ENCODE measurements at regions of chr17 and their contacts with region 1.

Region 1: GRCh38 chr17:59331129-59331928 is at the start of gene YPEL2:
- DNase-seq: peak; percentile 96
- H3K4me3 ChIP-seq: peak within 1 kb of the TSS; percentile 27 to 98 (median 75)
- H3K27ac ChIP-seq: peak within 1 kb of the TSS; percentile 69
- H3K4me1 ChIP-seq: peaks cover 53% of the 10 kb centered on the region
- H3K27me3 ChIP-seq: no peaks in the 10 kb centered on the region
- CTCF ChIP-seq: no peak
- POLR2A ChIP-seq: peak; percentile 57
- total RNA-seq, gene YPEL2: 59.5 and 66.8 TPM in 2 replicates

Region 2: GRCh38 chr17:59110973-59111938 is 220.1 kb before region 1 on chr17:
- CTCF ChIA-PET with region 1: no interaction called
- POLR2A ChIA-PET with region 1: no interaction called
- dilution Hi-C with region 1: no loop called
- intact Hi-C with region 1: no loop called
- DNase-seq: no peak
- H3K4me3 ChIP-seq: no peak overlapping the region
- H3K27ac ChIP-seq: no peak overlapping the region
- H3K4me1 ChIP-seq: peaks cover 6% of the 10 kb centered on the region
- H3K27me3 ChIP-seq: no peaks in the 10 kb centered on the region
- CTCF ChIP-seq: no peak
- POLR2A ChIP-seq: no peak

Region 3: DNA sequence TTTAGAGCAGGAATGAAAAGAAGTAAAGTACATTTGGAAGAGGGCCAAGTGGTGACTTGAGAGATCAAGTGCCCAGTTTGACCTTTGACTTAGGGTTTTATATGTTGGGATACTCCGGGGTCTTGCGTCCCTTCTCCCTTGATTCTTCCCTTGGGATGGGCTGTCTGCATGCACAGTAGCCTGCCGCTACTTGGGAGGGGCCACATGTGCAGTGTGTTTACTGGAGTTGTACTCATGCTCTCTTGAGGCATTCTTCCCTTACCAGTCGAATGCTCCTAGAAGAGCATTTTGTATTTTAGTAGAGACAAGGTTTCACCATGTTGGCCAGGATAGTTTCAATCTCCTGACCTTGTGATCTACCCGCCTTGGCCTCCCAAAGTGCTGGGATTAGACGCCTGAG is 87.2 kb before region 1 on chr17:
- CTCF ChIA-PET with region 1: no interaction called
- POLR2A ChIA-PET with region 1: no interaction called
- dilution Hi-C with region 1: no loop called
- intact Hi-C with region 1: no loop called
- DNase-seq: no peak
- H3K4me3 ChIP-seq: no peak overlapping the region
- H3K27ac ChIP-seq: no peak overlapping the region
- H3K4me1 ChIP-seq: no peaks in the 10 kb centered on the region
- H3K27me3 ChIP-seq: no peaks in the 10 kb centered on the region
- CTCF ChIP-seq: no peak
- POLR2A ChIP-seq: no peak

Region 4: GRCh38 chr17:59366773-59367657 is 35.7 kb after region 1 on chr17:
- CTCF ChIA-PET with region 1: interaction called, 7 read pairs
- POLR2A ChIA-PET with region 1: interaction called, 5 read pairs
- dilution Hi-C with region 1: no loop called
- intact Hi-C with region 1: loop called (anchors 2 kb)
- DNase-seq: peak; percentile 32
- H3K4me3 ChIP-seq: no peak overlapping the region
- H3K27ac ChIP-seq: no peak overlapping the region
- H3K4me1 ChIP-seq: peaks cover 48% of the 10 kb centered on the region
- H3K27me3 ChIP-seq: no peaks in the 10 kb centered on the region
- CTCF ChIP-seq: no peak
- POLR2A ChIP-seq: no peak

Region 5: DNA sequence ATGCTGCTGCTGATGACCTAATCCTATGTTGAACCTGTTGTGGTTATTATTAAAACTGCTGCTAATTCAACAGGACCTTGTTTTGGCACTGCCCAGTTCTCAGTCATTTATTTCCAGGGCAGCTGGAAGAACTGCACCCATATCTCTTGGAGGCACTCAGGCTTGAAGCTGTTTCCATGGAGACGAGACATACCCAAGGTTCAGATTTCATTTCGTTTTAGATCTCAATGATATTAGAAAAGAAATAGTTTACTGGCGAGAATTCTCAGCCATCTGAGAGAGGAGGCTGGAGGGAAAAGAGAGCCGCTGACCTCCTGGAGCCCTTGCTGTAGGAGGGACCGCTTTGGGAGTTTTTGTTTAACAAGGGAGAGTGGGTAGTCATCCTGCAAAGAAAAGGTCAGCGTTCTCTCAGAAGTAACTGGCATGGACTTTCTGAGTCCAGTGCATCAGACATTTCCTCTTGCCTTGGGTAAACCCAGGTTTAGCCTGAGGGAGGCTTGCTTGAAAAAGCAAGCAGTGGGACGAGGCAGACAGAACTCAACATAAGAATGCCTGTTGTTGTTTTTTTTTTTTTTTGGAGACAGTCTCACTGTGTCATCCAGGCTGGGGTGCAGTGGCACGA is 75.6 kb after region 1 on chr17:
- CTCF ChIA-PET with region 1: interaction called, 12 read pairs
- POLR2A ChIA-PET with region 1: no interaction called
- dilution Hi-C with region 1: no loop called
- intact Hi-C with region 1: no loop called
- DNase-seq: no peak
- H3K4me3 ChIP-seq: no peak overlapping the region
- H3K27ac ChIP-seq: no peak overlapping the region
- H3K4me1 ChIP-seq: no peaks in the 10 kb centered on the region
- H3K27me3 ChIP-seq: no peaks in the 10 kb centered on the region
- CTCF ChIP-seq: no peak
- POLR2A ChIP-seq: no peak

Region 6: GRCh38 chr17:59456933-59457573 is 125.7 kb after region 1 on chr17:
- CTCF ChIA-PET with region 1: interaction called, 3 read pairs
- POLR2A ChIA-PET with region 1: interaction called, 12 read pairs
- dilution Hi-C with region 1: no loop called
- intact Hi-C with region 1: no loop called
- DNase-seq: no peak
- H3K4me3 ChIP-seq: no peak overlapping the region
- H3K27ac ChIP-seq: no peak overlapping the region
- H3K4me1 ChIP-seq: no peaks in the 10 kb centered on the region
- H3K27me3 ChIP-seq: no peaks in the 10 kb centered on the region
- CTCF ChIP-seq: no peak
- POLR2A ChIP-seq: no peak

Region 7: GRCh38 chr17:59619293-59620063 is 288.1 kb after region 1 on chr17 and contains the start of gene CLTC:
- CTCF ChIA-PET with region 1: interaction called, 3 read pairs
- POLR2A ChIA-PET with region 1: interaction called, 8 read pairs
- dilution Hi-C with region 1: no loop called
- intact Hi-C with region 1: loop called (anchors 1 kb)
- DNase-seq: peak; percentile 97
- H3K4me3 ChIP-seq: peak within 1 kb of the TSS; percentile 88 to 94 (median 93)
- H3K27ac ChIP-seq: peak within 1 kb of the TSS; percentile 91
- H3K4me1 ChIP-seq: peaks cover 42% of the 10 kb centered on the region
- H3K27me3 ChIP-seq: no peaks in the 10 kb centered on the region
- CTCF ChIP-seq: no peak
- POLR2A ChIP-seq: peak; percentile 81
- total RNA-seq, gene CLTC: 317 and 326 TPM in 2 replicates

Region 8: DNA sequence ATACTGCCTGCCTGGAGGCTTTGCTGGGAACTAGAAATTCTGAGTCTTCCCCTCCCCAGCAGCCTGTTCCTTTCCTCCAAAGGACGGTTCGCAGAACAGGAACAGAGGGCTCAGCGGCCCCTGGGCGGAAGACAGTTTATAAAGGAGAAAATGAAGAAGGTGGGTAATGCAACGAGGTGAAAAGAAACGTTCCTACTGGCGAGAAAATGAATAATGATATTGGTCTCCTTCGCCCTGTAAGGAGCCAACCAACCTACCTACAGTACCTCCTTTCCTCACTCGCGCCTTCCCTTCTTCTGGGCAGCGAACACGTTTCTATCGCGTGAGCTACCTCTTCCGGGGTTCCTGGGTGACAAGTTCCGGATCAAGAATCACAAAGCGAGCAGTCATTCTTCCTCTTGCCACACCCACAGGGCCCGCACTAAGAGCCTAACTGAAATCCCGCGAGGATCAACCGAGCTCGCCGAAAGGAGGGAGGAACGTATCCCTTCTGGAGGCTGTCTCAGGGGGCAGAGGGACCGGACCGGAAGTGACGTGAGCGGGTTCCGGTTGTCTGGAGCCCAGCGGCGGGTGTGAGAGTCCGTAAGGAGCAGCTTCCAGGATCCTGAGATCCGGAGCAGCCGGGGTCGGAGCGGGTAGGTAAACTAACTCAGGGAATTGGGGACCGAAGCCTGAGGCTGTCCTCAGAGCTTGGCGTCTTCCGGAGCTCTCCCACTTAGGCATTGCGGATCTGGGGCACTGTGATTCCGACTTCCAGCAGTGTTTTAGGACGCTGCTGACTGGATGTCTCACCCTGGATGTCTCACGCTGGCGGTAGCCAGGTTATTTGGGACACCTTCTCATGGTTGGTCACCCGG is 376.0 kb after region 1 on chr17 and contains the starts of genes PTRH2 and VMP1:
- CTCF ChIA-PET with region 1: no interaction called
- POLR2A ChIA-PET with region 1: no interaction called
- dilution Hi-C with region 1: no loop called
- intact Hi-C with region 1: loop called (anchors 5 kb)
- DNase-seq: peak; percentile 100
- H3K4me3 ChIP-seq: peak within 1 kb of the TSS; percentile 59 to 90 (median 89)
- H3K27ac ChIP-seq: peak within 1 kb of the TSS; percentile 97
- H3K4me1 ChIP-seq: peaks cover 26% of the 10 kb centered on the region
- H3K27me3 ChIP-seq: no peaks in the 10 kb centered on the region
- CTCF ChIP-seq: no peak
- POLR2A ChIP-seq: peak; percentile 94
- total RNA-seq, gene PTRH2: 40.1 and 41.2 TPM in 2 replicates
- total RNA-seq, gene VMP1: 270 and 321 TPM in 2 replicates

Measured in endothelial cell of umbilical vein (primary cell).